Calu3 (cell line): ENCODE measurements at regions of chr6 and their contacts with region 1.

Region 1: GRCh38 chr6:126170978-126171382 is 168.9 kb upstream of the CENPW start:
- DNase-seq: peak; percentile 17
- H3K4me3 Mint-ChIP-seq: no peak overlapping the region
- H3K27ac Mint-ChIP-seq: peak overlapping the region; percentile 14
- H3K4me1 Mint-ChIP-seq: no peaks in the 10 kb centered on the region
- H3K27me3 Mint-ChIP-seq: no peaks in the 10 kb centered on the region
- CTCF ChIP-seq: peak; percentile 51

Region 2: DNA sequence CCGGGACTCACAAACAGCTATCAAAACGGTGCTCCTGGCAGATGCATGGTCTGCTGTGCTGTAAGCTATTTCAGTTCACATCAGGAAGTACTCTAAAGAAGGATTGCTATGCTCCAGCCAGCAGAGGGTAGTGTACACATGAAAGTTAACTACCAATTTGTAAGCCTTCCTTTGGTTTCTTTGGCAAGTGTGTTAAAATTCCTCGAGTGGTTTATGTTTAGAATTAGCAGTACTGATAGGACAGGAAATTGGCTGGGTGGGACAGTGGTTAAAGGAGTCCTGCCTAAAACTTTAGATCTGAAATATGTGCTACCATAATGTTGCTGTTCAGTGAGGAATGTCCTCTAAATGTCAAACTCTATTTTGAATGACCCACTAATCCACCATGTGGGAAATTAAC is 137.3 kb before region 1 on chr6:
- CTCF ChIA-PET with region 1: no interaction called
- intact Hi-C with region 1: loop called (anchors 2 kb)
- DNase-seq: peak; percentile 33
- H3K4me3 Mint-ChIP-seq: no peak overlapping the region
- H3K27ac Mint-ChIP-seq: no peak overlapping the region
- H3K4me1 Mint-ChIP-seq: no peaks in the 10 kb centered on the region
- H3K27me3 Mint-ChIP-seq: no peaks in the 10 kb centered on the region
- CTCF ChIP-seq: no peak

Region 3: DNA sequence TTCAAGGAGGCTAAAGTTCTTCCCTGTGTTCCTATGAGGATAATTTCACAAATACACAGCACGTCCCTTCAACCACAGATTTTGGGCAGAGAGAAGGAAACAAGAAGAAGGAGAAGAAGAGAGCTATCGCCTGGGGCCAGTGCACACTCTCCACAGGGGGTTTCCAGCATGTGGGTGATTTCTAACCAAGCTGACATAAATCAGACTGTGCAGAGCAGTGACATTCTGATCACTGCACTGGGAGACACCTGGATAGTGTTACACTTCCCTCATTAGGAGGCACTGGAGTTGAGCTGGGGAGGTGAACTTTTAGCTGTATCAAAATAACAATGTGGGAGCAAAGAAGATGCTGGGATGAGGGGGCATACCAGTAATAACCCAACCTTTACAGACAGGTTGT is 97.1 kb after region 1 on chr6:
- CTCF ChIA-PET with region 1: no interaction called
- intact Hi-C with region 1: no loop called
- DNase-seq: no peak
- H3K4me3 Mint-ChIP-seq: no peak overlapping the region
- H3K27ac Mint-ChIP-seq: no peak overlapping the region
- H3K4me1 Mint-ChIP-seq: peaks cover 9% of the 10 kb centered on the region
- H3K27me3 Mint-ChIP-seq: no peaks in the 10 kb centered on the region
- CTCF ChIP-seq: no peak

Region 4: DNA sequence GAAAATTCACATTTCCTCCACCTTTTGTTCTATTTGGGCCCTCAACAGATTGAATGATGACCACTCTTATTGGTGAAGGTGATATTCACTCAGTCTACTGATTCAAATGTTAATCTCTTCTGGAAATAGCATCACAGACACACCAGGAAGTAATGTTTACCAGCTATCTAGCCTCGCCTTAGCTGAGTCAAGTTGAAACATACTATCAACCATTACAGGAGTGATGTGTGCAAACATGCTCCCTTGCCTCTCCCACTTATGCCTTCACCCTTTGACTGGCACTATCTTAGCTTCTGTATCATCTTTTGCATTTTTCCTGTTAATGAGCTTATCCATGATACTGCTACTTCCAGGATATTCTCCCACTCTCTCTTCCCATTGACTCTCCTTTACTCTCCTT is 360.9 kb after region 1 on chr6:
- CTCF ChIA-PET with region 1: no interaction called
- intact Hi-C with region 1: loop called (anchors 10 kb)
- DNase-seq: no peak
- H3K4me3 Mint-ChIP-seq: no peak overlapping the region
- H3K27ac Mint-ChIP-seq: no peak overlapping the region
- H3K4me1 Mint-ChIP-seq: peaks cover 10% of the 10 kb centered on the region
- H3K27me3 Mint-ChIP-seq: no peaks in the 10 kb centered on the region
- CTCF ChIP-seq: no peak